PC-9 (cell line): ENCODE measurements at regions of chr11 and their contacts with region 1.

Region 1: GRCh38 chr11:39304586-39304985 is 2154.9 kb downstream of the LRRC4C start:
- DNase-seq: no peak
- H3K4me3 ChIP-seq: no peak overlapping the region
- H3K27ac ChIP-seq: no peak overlapping the region
- H3K4me1 ChIP-seq: no peaks in the 10 kb centered on the region
- H3K27me3 ChIP-seq: no peaks in the 10 kb centered on the region
- CTCF ChIP-seq: no peak

Region 2: GRCh38 chr11:39236916-39237315 is 67.7 kb before region 1 on chr11:
- CTCF ChIA-PET with region 1: no interaction called
- POLR2A ChIA-PET with region 1: no interaction called
- intact Hi-C with region 1: no loop called
- DNase-seq: no peak
- H3K4me3 ChIP-seq: no peak overlapping the region
- H3K27ac ChIP-seq: no peak overlapping the region
- H3K4me1 ChIP-seq: no peaks in the 10 kb centered on the region
- H3K27me3 ChIP-seq: no peaks in the 10 kb centered on the region
- CTCF ChIP-seq: no peak

Region 3: DNA sequence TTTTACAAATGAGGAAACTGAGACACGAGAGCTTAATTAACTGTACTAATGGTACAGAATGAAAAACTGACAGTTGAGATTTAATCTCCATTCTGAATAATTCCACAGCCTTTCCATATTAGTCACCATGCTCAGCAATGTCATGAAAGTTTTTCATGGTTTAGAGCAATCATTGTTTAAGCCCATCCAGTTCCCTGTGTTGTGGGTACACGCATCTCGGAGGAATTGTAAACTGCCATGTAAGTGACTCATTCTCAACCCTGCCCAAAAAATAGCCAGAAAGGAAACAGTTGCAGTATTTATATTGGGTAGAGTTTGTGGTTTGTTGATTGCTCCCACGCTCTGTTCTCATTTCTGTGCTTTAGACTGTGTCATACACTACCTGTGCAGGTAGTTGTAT is 364.1 kb after region 1 on chr11:
- CTCF ChIA-PET with region 1: no interaction called
- POLR2A ChIA-PET with region 1: interaction called, 23 read pairs
- intact Hi-C with region 1: no loop called
- DNase-seq: no peak
- H3K4me3 ChIP-seq: no peak overlapping the region
- H3K27ac ChIP-seq: no peak overlapping the region
- H3K4me1 ChIP-seq: no peaks in the 10 kb centered on the region
- H3K27me3 ChIP-seq: no peaks in the 10 kb centered on the region
- CTCF ChIP-seq: no peak